Endothelial cell of umbilical vein (primary cell): ENCODE measurements at regions of chr16 and their contacts with region 1.

Region 1: DNA sequence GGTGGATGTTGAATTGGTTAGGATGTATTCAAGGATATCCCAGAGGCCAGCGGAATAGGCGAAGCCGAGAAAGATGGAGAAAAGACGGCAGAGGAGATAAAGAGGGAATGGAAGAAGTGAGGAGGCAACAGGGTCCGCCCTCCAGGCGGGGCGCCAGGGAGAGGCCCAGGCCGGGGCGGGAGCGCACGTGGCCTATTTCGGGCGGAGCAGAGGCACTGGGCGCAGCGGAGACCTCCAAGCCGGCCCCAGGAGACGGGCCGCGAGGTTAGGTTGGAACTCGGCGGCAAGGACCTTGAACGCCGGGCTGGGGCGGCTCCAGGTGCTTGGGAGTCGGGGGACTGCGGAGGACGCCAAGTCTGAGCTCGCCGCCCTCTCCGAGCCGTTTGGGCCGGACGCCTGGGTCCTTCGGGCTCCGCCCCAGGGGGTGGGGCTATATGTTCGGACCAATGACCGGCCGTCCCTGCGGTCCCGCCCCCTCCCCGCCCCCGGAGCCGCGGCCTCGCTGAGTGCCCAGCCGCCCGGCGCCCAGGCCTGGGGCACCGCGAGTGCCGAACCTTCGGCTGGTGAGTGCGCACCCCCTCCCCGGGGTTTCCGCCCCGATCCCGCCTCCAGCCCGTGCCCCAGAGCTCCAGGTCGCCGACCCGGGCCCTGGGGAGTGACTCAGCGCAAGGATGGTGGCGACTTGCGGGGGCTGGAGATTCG is at the start of gene ZNF771:
- DNase-seq: peak; percentile 88
- H3K4me3 ChIP-seq: peak within 1 kb of the TSS; percentile 29 to 56 (median 47)
- H3K27ac ChIP-seq: peak within 1 kb of the TSS; percentile 71
- H3K4me1 ChIP-seq: peaks cover 22% of the 10 kb centered on the region
- H3K27me3 ChIP-seq: no peaks in the 10 kb centered on the region
- CTCF ChIP-seq: no peak
- POLR2A ChIP-seq: peak; percentile 92
- total RNA-seq, gene ZNF771: 10.3 and 11.7 TPM in 2 replicates

Region 2: GRCh38 chr16:30335598-30336474 is 71.4 kb before region 1 on chr16:
- CTCF ChIA-PET with region 1: interaction called, 14 read pairs
- POLR2A ChIA-PET with region 1: no interaction called
- dilution Hi-C with region 1: no loop called
- intact Hi-C with region 1: no loop called
- DNase-seq: no peak
- H3K4me3 ChIP-seq: peak overlapping the region; percentile 23 to 56 (median 54)
- H3K27ac ChIP-seq: no peak overlapping the region
- H3K4me1 ChIP-seq: peaks cover 2% of the 10 kb centered on the region
- H3K27me3 ChIP-seq: no peaks in the 10 kb centered on the region
- CTCF ChIP-seq: no peak
- POLR2A ChIP-seq: no peak

Region 3: DNA sequence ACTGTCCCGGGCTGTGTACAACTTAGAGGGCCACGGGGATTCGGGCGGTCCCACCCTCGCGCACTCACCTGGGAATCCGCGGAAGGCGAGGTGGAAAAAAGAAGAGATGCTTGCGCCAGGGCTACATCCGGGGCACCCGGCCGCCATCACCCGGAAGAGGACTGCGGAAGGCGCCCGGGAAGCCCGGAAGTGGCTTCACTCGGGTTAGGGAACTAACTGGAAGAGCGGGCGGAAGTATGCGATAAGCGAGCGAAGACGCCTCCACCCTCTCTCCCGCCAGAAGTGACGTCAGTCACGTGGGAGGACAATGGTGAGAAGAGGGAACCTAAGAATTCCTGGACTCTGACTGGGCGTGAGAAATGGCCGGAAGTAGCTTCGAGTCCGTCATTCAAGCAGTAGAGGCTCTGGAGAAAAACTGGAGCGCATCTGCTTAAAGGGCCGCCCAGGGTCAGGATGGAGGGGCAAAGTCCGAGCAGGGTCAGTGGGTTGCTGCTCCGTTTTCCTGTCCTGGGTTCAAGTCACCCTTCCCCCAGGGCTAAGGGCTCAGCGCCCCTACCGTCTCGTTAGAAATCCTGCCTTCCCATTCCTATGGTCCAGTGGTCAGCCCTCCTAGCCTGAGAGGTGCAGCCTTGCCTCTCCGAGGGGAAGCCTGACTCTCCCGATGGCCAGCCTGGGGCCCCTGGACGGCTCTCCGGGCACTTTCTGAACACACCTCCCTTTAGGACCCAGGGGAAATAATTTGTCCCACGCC is 51.9 kb before region 1 on chr16 and contains the start of gene CD2BP2:
- CTCF ChIA-PET with region 1: interaction called, 12 read pairs
- POLR2A ChIA-PET with region 1: interaction called, 3 read pairs
- dilution Hi-C with region 1: no loop called
- intact Hi-C with region 1: no loop called
- DNase-seq: peak; percentile 98
- H3K4me3 ChIP-seq: peak within 1 kb of the TSS; percentile 65 to 84 (median 78)
- H3K27ac ChIP-seq: peak within 1 kb of the TSS; percentile 95
- H3K4me1 ChIP-seq: peaks cover 32% of the 10 kb centered on the region
- H3K27me3 ChIP-seq: no peaks in the 10 kb centered on the region
- CTCF ChIP-seq: peak in 1 of 2 donors; percentile 2
- POLR2A ChIP-seq: peak; percentile 57
- total RNA-seq, gene CD2BP2: 75.7 and 76.4 TPM in 2 replicates

Region 4: GRCh38 chr16:30370444-30371247 is 36.6 kb before region 1 on chr16 and contains the start of gene TBC1D10B:
- CTCF ChIA-PET with region 1: interaction called, 24 read pairs
- POLR2A ChIA-PET with region 1: interaction called, 6 read pairs
- dilution Hi-C with region 1: no loop called
- intact Hi-C with region 1: loop called (anchors 1 kb)
- DNase-seq: peak; percentile 100
- H3K4me3 ChIP-seq: peak within 1 kb of the TSS; percentile 49 to 83 (median 70)
- H3K27ac ChIP-seq: peak within 1 kb of the TSS; percentile 42
- H3K4me1 ChIP-seq: peaks cover 24% of the 10 kb centered on the region
- H3K27me3 ChIP-seq: no peaks in the 10 kb centered on the region
- CTCF ChIP-seq: peak; percentile 4 to 28
- POLR2A ChIP-seq: no peak
- total RNA-seq, gene TBC1D10B: 57.4 and 63.0 TPM in 2 replicates

Region 5: DNA sequence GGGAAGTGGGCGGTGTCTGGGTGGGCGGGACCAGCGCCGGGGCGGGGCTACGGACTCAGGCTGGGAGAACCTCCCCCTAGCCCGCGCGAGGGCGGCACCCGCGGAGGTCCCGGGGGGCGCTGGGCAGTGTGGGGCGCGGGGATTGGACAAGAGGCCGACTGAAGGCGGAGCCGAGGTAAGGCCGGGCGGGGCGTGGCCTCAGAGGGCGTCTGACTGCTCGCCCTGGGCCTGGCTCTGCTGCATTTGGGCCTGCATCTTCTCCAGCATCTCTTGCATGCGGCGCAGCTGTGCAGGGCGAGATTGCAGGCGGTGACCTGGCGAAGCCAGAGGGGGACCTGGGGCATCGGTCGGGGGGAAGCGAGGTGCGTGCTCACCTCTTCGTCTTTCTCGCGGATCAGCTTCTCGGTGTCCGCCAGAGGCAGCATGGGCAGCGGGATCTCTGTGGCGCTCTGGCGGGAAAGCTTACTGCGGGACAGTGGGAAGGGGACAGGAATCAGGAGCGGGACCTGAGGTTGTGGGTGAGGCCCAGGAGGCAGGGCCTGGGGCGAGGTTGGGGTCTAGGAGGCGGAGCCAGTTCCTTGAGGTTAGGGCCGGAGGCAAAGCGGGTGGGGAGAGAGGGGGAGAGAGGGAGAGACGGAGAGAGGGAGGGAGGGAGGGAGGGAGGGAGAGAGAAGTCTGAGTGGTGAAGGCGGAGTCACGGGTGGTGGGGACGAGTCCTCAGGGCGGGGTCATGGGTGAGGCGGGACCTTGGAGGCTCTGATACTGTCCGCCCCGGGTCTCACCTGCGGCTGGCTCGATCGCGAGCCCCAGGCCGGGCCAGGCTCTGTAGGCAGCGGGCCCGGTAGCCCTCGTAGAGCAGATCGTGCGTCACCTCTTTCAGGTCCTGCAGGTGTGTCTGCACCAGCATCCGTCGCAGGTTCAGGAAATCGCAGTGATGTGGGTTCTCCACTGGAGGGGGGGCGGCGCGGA is 28.7 kb before region 1 on chr16:
- CTCF ChIA-PET with region 1: interaction called, 11 read pairs
- POLR2A ChIA-PET with region 1: no interaction called
- dilution Hi-C with region 1: no loop called
- intact Hi-C with region 1: no loop called
- DNase-seq: peak; percentile 99
- H3K4me3 ChIP-seq: peak overlapping the region; percentile 61 to 83 (median 71)
- H3K27ac ChIP-seq: peak overlapping the region; percentile 98
- H3K4me1 ChIP-seq: peaks cover 12% of the 10 kb centered on the region
- H3K27me3 ChIP-seq: no peaks in the 10 kb centered on the region
- CTCF ChIP-seq: peak; percentile 6 to 34
- POLR2A ChIP-seq: peak; percentile 82

Region 6: DNA sequence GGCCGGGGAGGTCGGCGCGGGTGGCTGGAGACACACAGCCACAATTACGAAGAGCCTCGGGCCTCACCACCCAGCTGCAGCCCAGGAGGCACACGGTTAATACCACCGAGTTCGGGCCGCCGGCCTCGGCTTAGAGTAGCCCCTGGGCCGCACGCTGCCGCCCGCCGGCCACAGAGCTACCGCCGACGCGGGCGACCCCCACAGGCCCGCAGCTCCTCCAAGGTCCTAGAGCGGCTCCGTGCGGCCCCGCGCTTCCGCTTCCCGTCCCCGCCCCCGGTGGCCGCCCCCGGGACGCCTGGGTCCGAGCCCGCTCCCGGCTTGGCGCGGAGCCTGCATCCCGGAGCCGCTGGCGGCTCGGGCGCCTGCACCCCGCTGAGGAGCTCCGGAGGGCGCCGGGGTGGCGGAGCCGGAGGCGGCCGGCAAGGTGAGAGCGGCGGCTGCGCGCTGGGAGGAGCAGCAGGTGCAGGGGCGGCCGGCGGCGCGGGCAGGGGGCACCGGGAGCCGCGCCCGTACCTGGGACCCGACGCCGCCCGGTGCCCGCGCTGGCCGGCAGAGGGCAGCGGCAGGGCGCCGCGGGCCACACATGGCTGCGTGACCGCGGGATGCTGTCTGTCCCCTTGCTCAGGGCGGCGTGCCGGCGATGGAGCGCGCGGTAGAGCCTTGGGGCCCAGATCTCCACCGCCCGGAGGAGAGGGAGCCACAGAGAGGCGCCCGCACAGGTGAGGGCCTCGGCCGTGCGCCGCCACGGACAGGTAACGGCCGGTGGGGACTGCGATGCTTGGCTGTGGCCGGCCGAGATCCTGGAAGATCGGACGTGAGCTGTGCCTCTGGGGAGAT is 11.9 kb before region 1 on chr16 and contains the start of gene ZNF48:
- CTCF ChIA-PET with region 1: interaction called, 62 read pairs
- POLR2A ChIA-PET with region 1: interaction called, 6 read pairs
- dilution Hi-C with region 1: no loop called
- intact Hi-C with region 1: loop called (anchors 1 kb)
- DNase-seq: peak; percentile 89
- H3K4me3 ChIP-seq: peak within 1 kb of the TSS; percentile 46 to 85 (median 81)
- H3K27ac ChIP-seq: peak within 1 kb of the TSS; percentile 66
- H3K4me1 ChIP-seq: peaks cover 21% of the 10 kb centered on the region
- H3K27me3 ChIP-seq: no peaks in the 10 kb centered on the region
- CTCF ChIP-seq: peak; percentile 23 to 36
- POLR2A ChIP-seq: peak; percentile 17
- total RNA-seq, gene ZNF48: 15.1 and 15.3 TPM in 2 replicates

Region 7: DNA sequence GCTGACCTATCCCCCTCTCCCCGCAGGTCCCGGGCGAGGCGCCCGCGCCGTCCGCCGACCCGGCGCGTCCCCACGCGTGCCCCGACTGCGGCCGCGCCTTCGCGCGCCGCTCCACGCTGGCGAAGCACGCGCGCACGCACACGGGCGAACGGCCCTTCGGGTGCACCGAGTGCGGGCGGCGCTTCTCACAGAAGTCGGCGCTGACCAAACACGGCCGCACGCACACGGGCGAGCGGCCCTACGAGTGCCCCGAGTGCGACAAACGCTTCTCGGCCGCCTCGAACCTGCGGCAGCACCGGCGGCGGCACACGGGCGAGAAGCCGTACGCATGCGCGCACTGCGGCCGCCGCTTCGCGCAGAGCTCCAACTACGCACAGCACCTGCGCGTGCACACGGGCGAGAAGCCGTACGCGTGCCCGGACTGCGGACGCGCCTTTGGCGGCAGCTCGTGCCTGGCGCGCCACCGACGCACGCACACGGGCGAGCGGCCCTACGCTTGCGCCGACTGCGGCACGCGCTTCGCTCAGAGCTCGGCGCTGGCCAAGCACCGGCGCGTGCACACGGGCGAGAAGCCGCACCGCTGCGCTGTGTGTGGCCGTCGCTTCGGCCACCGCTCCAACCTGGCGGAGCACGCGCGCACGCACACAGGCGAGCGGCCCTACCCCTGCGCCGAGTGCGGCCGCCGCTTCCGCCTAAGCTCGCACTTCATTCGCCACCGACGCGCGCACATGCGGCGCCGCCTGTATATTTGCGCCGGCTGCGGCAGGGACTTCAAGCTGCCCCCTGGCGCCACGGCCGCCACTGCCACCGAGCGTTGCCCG is 10.5 kb after region 1 on chr16:
- CTCF ChIA-PET with region 1: interaction called, 23 read pairs
- POLR2A ChIA-PET with region 1: interaction called, 7 read pairs
- dilution Hi-C with region 1: no loop called
- intact Hi-C with region 1: loop called (anchors 1 kb)
- DNase-seq: peak; percentile 96
- H3K4me3 ChIP-seq: peak overlapping the region in 2 of 3 experiments; percentile 44 to 57
- H3K27ac ChIP-seq: no peak overlapping the region
- H3K4me1 ChIP-seq: peaks cover 3% of the 10 kb centered on the region
- H3K27me3 ChIP-seq: no peaks in the 10 kb centered on the region
- CTCF ChIP-seq: peak in 1 of 2 donors; percentile 37
- POLR2A ChIP-seq: peak; percentile 42